ENCODE measurements at regions of chrX and their contacts with region 1.

Region 1: DNA sequence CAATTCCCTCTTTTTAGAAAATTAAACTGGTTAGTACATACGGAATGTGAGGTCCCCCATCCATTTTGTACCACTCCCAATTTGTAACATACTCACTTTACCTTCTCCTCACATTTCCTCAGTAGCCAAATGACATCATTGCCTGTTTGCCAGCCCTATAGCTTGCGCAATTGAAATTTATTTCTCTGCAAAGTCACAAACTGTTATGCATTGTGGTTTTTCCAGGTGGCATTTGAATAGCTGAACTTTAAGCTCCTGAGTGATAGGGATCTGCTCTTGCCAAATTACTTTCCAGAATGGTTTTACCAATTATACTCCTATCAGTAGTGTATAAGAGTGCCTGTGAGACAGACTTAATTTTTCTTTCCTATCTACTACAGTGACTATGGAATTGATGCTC is 7.7 kb downstream of the COL4A5 start:
- DNase-seq: no peak
- ATAC-seq: no peak
- H3K4me3 ChIP-seq: no peak overlapping the region
- H3K27ac ChIP-seq: no peak overlapping the region
- H3K4me1 ChIP-seq: no peaks in the 10 kb centered on the region
- H3K27me3 ChIP-seq: no peaks in the 10 kb centered on the region
- CTCF ChIP-seq: no peak

Region 2: DNA sequence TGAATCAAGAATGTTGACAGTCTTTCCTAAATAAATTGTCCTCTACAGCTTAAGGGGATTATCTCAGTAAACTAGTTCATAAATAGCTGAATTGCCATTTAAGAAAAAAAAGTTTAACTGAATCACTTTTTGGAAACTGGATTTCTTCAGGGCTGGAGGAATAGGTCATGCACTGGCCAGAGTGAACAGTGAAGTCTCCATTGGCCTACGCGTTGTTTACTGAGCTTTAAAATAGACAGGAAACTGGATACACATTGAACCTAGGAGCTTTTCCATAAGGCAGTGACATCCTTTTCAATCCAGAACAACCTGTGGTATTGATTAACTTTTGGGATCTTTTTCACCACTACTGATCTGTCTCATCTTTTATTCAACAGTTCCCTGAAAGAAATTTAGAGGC is 67.1 kb before region 1 on chrX:
- intact Hi-C with region 1: no loop called
- DNase-seq: no peak
- ATAC-seq: peak in 2 of 4 donors; percentile 61 to 72
- H3K4me3 ChIP-seq: no peak overlapping the region
- H3K27ac ChIP-seq: no peak overlapping the region
- H3K4me1 ChIP-seq: peaks cover 4% of the 10 kb centered on the region
- H3K27me3 ChIP-seq: peaks cover 0 to 3% (median 0%) of the 10 kb centered on the region in 3 donors
- CTCF ChIP-seq: no peak

Region 3: GRCh38 chrX:108473989-108474388 is 26.7 kb after region 1 on chrX:
- intact Hi-C with region 1: loop called in 1 of 2 experiments (anchors 2 kb)
- DNase-seq: no peak
- ATAC-seq: no peak
- H3K4me3 ChIP-seq: no peak overlapping the region
- H3K27ac ChIP-seq: no peak overlapping the region
- H3K4me1 ChIP-seq: no peaks in the 10 kb centered on the region
- H3K27me3 ChIP-seq: no peaks in the 10 kb centered on the region
- CTCF ChIP-seq: no peak